ENCODE measurements at regions of chr18 and their contacts with region 1.

Region 1: DNA sequence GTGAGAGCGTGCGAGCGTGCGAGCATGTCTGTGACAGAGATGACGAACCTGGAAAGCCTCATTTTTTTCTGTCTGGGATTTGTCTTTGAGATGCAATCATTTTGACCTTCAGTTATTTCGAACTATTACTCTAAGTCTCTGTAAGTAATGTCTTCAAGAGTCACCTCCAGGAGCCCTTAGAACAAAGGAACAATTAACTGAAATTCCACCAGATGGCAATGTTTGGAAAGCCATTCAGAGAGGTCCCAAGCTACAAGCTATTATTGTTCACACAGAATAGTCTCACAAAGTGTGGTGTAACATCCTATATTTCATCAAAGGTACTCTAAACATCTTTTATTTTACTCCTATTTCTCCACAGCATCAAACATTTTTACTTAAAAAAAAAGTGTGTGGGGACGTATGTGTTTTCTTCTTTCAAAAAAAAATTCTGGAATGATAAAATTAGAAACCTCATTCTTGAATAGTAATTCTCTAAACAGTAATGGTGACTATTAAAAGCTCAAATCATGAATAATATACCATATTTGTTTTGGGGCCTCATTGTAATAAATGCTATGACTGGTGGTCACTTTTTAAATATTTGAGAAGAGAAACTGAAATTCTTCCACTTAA is 35.1 kb upstream of the MAPRE2 start:
- DNase-seq: no peak
- H3K4me3 Mint-ChIP-seq: no peak overlapping the region
- H3K27ac Mint-ChIP-seq: no peak overlapping the region
- H3K4me1 Mint-ChIP-seq: no peaks in the 10 kb centered on the region
- H3K27me3 Mint-ChIP-seq: no peaks in the 10 kb centered on the region

Region 2: GRCh38 chr18:35067454-35067853 is 61.4 kb after region 1 on chr18:
- CTCF ChIA-PET with region 1: no interaction called
- intact Hi-C with region 1: no loop called
- DNase-seq: no peak
- H3K4me3 Mint-ChIP-seq: no peak overlapping the region
- H3K27ac Mint-ChIP-seq: no peak overlapping the region
- H3K4me1 Mint-ChIP-seq: peaks cover 37% of the 10 kb centered on the region
- H3K27me3 Mint-ChIP-seq: no peaks in the 10 kb centered on the region

Region 3: GRCh38 chr18:35122586-35123224 is 116.6 kb after region 1 on chr18:
- CTCF ChIA-PET with region 1: interaction called, 6 read pairs
- intact Hi-C with region 1: loop called (anchors 5 kb)
- DNase-seq: peak; percentile 65
- H3K4me3 Mint-ChIP-seq: peak overlapping the region; percentile 27
- H3K27ac Mint-ChIP-seq: peak overlapping the region; percentile 47
- H3K4me1 Mint-ChIP-seq: peaks cover 36% of the 10 kb centered on the region
- H3K27me3 Mint-ChIP-seq: no peaks in the 10 kb centered on the region

Region 4: GRCh38 chr18:35143622-35144596 is 137.8 kb after region 1 on chr18:
- CTCF ChIA-PET with region 1: interaction called, 16 read pairs
- intact Hi-C with region 1: loop called (anchors 1 kb)
- DNase-seq: peak; percentile 62
- H3K4me3 Mint-ChIP-seq: no peak overlapping the region
- H3K27ac Mint-ChIP-seq: peak overlapping the region; percentile 53
- H3K4me1 Mint-ChIP-seq: peaks cover 2% of the 10 kb centered on the region
- H3K27me3 Mint-ChIP-seq: no peaks in the 10 kb centered on the region

Region 5: GRCh38 chr18:35185771-35186170 is 179.7 kb after region 1 on chr18:
- CTCF ChIA-PET with region 1: no interaction called
- intact Hi-C with region 1: loop called (anchors 2 kb)
- DNase-seq: peak; percentile 18
- H3K4me3 Mint-ChIP-seq: no peak overlapping the region
- H3K27ac Mint-ChIP-seq: no peak overlapping the region
- H3K4me1 Mint-ChIP-seq: no peaks in the 10 kb centered on the region
- H3K27me3 Mint-ChIP-seq: no peaks in the 10 kb centered on the region

Region 6: DNA sequence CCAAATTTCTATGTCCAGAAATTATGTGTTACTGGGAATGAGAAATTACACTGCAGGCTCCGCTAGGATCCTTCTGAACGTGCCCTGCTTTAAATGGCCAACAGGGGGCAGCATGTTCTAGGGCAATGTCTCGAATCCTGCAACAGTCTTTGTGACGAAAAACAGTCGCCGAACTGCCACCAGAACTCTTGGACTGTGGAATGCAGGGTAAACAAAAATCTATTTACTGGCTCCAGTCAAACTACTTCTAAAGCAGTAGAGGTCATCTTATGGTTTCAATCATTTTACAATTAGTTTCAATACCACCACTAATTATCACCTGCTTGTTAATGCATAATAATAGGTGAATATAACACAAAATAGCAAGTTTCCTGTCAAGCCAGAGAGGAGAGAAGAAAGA is 225.0 kb after region 1 on chr18:
- CTCF ChIA-PET with region 1: no interaction called
- intact Hi-C with region 1: loop called (anchors 2 kb)
- DNase-seq: peak; percentile 88
- H3K4me3 Mint-ChIP-seq: peak overlapping the region; percentile 56
- H3K27ac Mint-ChIP-seq: no peak overlapping the region
- H3K4me1 Mint-ChIP-seq: peaks cover 3% of the 10 kb centered on the region
- H3K27me3 Mint-ChIP-seq: peaks cover 3% of the 10 kb centered on the region

Region 7: DNA sequence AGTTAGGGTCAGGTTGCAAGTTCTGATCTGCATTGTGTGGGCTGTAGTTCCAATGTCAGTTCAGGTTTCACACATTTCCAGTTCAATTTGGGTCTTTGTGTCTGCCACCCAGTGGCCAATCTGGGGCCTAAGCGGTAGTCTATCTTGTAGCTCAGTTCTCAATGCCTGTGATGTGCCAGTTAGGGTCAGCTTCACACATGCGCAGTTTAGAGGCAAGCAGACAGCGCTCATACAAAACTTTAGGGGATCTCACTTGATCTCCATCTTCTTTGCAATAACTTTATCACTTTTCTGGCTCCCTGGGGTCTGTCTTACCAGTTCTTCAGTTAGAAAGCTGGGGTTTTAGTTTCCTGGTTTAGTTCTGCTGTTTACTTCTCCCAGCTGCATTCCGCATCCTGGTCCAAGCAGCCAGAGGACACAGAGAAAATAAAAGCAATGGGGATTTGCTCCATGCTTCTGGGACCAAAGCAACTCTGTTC is 349.1 kb after region 1 on chr18:
- CTCF ChIA-PET with region 1: interaction called, 4 read pairs
- intact Hi-C with region 1: loop called (anchors 1 kb)
- DNase-seq: peak; percentile 68
- H3K4me3 Mint-ChIP-seq: no peak overlapping the region
- H3K27ac Mint-ChIP-seq: no peak overlapping the region
- H3K4me1 Mint-ChIP-seq: peaks cover 5% of the 10 kb centered on the region
- H3K27me3 Mint-ChIP-seq: no peaks in the 10 kb centered on the region

Region 8: DNA sequence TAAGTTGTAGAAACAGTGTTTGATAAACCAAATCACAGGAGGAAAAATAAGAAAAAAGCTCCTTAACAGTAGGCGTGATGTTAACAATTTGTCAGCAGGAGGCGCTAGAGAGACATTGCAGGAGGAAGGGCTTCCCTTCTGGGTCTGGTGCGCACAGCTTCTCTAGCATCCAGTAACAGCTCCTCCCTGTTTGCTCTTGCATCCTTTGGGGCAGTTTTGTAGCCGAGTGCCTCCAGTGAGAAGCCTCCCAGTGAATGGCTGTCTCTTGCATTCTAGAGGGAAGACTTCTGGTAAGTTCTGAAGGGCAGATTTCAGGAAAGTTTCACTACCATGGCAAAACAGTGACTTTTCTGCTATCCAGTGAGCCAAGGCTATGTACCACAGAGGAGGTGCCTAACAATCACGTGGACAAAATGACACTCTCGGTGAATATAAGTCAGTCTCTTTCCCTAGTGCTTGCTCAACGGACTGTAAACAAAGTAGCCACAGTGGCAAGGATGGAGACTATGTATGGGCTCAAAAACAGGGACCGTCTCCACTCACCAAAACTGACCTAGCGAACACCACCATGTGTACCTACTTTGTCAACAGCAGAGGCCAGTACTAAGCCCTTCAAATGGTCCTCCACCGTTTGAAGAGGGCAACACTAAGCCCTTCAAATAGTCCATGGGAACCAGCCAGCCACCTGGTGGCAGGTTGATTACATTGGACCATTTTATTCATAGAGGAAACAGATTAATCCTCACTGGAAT is 380.7 kb after region 1 on chr18:
- CTCF ChIA-PET with region 1: interaction called, 6 read pairs
- intact Hi-C with region 1: loop called (anchors 1 kb)
- DNase-seq: peak; percentile 81
- H3K4me3 Mint-ChIP-seq: no peak overlapping the region
- H3K27ac Mint-ChIP-seq: no peak overlapping the region
- H3K4me1 Mint-ChIP-seq: peaks cover 2% of the 10 kb centered on the region
- H3K27me3 Mint-ChIP-seq: peaks cover 23% of the 10 kb centered on the region

Measured in activated naive CD4-positive, alpha-beta T cell treated with anti-CD3 and anti-CD28 coated beads for 36 hours (primary cell).